ENCODE measurements at regions of chr2 and their contacts with region 1.

Region 1: DNA sequence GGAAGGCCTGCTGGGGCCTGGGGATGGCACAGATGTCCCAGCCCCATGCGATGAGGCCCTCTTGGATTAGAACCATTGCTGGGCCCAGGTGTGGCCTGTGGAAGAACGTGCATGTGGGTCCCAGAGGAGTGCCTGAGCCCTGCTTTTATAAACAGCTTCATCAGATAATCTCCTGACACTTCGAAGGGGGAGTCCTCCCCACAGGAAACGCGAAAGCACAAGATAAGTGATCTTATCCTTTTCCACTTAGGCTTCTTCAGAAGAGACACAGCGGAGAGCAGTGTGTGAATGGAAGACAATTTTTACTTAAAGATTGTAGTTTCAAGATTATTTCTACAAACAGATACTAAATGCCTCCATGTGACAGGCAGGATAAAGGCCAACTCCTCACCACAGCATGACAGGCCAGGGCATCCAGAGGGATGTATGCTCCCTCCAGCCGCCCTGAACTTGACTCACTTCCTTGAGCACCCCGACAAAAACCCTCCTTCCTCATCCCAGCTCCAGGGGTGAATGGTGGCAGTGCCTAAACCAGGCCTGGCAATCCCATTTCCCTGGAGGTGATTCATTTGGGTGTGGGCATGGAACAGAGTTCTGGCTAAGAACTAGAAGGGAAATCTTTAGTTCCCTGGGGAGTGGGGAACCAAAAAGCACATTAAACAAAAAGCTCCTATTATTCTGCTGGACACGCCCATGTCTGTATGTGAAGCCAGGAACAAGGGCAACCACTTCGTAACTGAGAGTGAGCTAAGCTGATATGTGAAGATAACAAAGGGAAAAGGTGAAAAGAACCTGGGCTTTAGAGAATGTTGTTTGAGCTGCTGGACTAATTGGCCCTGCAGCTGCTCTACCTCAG is 56.2 kb upstream of the TMEM163 start:
- DNase-seq: peak; percentile 63 to 70
- H3K4me3 ChIP-seq: no peak overlapping the region
- H3K27ac ChIP-seq: peak overlapping the region; percentile 85
- H3K4me1 ChIP-seq: peaks cover 62% of the 10 kb centered on the region
- H3K27me3 ChIP-seq: no peaks in the 10 kb centered on the region
- CTCF ChIP-seq: no peak

Region 2: GRCh38 chr2:134623796-134624195 is 151.2 kb before region 1 on chr2:
- CTCF ChIA-PET with region 1: no interaction called
- POLR2A ChIA-PET with region 1: no interaction called
- intact Hi-C with region 1: no loop called
- DNase-seq: no peak
- H3K4me3 ChIP-seq: no peak overlapping the region
- H3K27ac ChIP-seq: no peak overlapping the region
- H3K4me1 ChIP-seq: no peaks in the 10 kb centered on the region
- H3K27me3 ChIP-seq: no peaks in the 10 kb centered on the region
- CTCF ChIP-seq: no peak

Region 3: DNA sequence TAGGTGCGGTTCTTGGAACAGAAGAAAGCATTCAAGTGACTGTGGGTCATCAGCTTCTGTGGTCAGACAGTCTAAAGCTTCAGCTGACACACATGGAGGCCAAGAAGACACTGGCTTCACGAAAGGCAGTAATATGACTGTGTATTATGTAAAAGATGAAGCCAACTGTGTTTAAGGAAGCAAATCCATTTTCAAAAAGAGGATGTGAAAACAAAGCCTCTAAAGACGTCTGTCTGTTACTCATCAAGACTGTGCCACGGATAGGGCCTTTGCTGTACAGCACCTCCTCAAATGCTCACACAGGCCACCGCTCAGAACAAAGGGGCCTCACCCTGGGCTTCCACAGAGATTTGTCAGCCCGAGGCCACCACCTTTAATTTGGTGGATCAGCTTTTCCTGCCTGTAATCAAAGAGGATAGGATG is 35.1 kb before region 1 on chr2:
- CTCF ChIA-PET with region 1: no interaction called
- POLR2A ChIA-PET with region 1: interaction called, 4 read pairs
- intact Hi-C with region 1: loop called (anchors 5 kb)
- DNase-seq: peak in 1 of 2 experiments; percentile 11
- H3K4me3 ChIP-seq: no peak overlapping the region
- H3K27ac ChIP-seq: no peak overlapping the region
- H3K4me1 ChIP-seq: peaks cover 31% of the 10 kb centered on the region
- H3K27me3 ChIP-seq: no peaks in the 10 kb centered on the region
- CTCF ChIP-seq: no peak

Region 4: DNA sequence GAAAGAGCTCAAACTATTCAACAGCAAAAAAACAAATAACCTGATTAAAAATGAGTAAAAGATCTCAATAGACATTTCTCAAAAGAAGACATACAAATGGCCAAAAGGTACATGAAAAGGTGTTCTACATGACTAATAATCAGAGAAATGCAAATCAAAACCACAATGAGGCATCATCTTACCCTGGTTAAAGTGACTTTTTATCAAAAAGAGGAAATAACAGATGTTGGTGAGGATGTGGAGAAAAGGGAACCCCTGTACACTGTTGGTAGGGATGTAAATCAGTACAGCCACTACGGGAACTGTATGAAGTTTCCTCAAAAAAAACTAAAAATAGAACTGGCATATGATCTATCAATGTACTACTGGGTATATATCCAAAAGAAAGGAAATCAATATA is 16.4 kb before region 1 on chr2:
- CTCF ChIA-PET with region 1: no interaction called
- POLR2A ChIA-PET with region 1: no interaction called
- intact Hi-C with region 1: no loop called
- DNase-seq: no peak
- H3K4me3 ChIP-seq: no peak overlapping the region
- H3K27ac ChIP-seq: no peak overlapping the region
- H3K4me1 ChIP-seq: peaks cover 11% of the 10 kb centered on the region
- H3K27me3 ChIP-seq: no peaks in the 10 kb centered on the region
- CTCF ChIP-seq: no peak

Measured in PC-9 (cell line).